Mammary epithelial cell (primary cell): ENCODE measurements at regions of chr19 and their contacts with region 1.

Region 1: DNA sequence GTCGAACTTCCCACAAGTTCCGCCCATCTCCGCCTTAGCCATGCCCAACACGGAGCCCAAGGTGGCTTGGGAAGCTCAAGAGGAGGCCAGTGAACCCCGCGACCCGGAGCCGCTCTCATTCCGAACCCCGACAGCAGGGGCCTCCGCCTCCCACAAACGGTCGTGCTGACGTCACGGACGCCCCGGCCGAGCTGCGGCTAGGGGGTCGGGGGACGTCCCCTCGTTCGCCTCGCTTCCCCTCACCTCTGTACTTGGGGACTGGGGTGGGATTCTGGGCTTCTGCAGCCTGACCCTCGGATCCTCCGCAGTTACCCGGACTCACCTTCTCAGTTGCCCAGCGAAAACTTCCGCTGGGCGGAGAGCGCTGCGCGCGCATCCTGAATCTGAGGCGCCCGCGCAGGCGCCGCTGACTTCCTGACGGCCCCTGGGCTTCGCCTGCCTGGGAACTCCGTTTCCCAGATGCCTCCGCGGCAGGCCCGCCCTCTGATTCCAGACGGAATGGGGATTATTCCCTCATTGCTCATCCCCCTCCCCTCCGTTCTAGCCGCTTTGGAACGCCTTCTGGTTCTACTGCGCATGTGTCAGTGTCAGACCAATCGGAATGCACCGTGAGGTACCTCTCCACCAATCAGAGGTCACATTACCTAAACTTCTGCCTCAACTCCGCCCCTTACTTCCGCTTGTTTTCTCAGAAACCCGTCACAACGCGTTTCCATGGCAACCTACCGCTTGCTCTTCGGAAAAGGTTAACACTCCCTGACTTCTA is at the start of gene VRK3:
- DNase-seq: peak; percentile 100
- H3K4me3 ChIP-seq: peak within 1 kb of the TSS; percentile 89 to 99 (median 98)
- H3K27ac ChIP-seq: peak within 1 kb of the TSS; percentile 98
- H3K4me1 ChIP-seq: peaks cover 5% of the 10 kb centered on the region
- H3K27me3 ChIP-seq: no peaks in the 10 kb centered on the region
- CTCF ChIP-seq: peak; percentile 7 to 36
- total RNA-seq, gene VRK3: 20.7 to 32.8 TPM

Region 2: GRCh38 chr19:49881672-49882394 is 143.4 kb before region 1 on chr19:
- CTCF ChIA-PET with region 1: no interaction called
- dilution Hi-C with region 1: no loop called
- in situ Hi-C with region 1: no loop called
- intact Hi-C with region 1: no loop called
- DNase-seq: no peak
- H3K4me3 ChIP-seq: no peak overlapping the region
- H3K27ac ChIP-seq: no peak overlapping the region
- H3K4me1 ChIP-seq: peaks cover 12% of the 10 kb centered on the region
- H3K27me3 ChIP-seq: no peaks in the 10 kb centered on the region
- CTCF ChIP-seq: no peak

Region 3: DNA sequence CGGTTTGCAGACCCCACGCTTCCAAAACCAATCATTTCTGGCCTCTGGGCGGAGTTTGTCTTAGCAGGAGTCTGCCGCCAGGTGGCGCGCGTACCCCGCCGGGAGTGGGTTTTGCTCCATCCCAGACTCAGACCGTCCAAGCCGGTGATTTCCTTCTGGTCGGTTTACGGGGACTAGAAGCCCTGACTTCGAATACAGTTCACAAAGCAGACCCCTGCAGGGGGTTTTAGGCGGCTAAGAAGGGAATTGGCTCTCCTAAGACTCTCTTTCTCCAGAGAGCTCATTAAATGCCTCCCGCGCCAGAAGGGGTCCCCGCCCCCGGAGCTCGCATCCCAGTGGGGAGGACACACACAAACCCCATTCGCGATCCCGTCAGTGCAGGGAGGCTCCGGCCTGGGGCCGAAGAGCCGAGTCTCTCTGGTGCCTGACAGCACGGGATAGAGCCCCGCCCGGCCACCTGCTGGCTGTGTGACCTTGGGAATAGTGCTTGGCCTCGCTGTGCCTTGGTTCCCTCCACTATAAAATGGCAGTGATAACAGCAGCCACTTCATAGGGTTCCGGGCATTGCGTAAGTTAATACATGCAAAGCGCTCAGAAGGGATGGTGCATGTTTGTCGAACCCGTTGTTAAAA is 87.3 kb before region 1 on chr19:
- CTCF ChIA-PET with region 1: no interaction called
- dilution Hi-C with region 1: no loop called
- in situ Hi-C with region 1: no loop called
- intact Hi-C with region 1: loop called (anchors 2 kb)
- DNase-seq: peak; percentile 39
- H3K4me3 ChIP-seq: peak overlapping the region; percentile 21 to 28 (median 26)
- H3K27ac ChIP-seq: no peak overlapping the region
- H3K4me1 ChIP-seq: no peaks in the 10 kb centered on the region
- H3K27me3 ChIP-seq: no peaks in the 10 kb centered on the region
- CTCF ChIP-seq: peak; percentile 86 to 99

Region 4: DNA sequence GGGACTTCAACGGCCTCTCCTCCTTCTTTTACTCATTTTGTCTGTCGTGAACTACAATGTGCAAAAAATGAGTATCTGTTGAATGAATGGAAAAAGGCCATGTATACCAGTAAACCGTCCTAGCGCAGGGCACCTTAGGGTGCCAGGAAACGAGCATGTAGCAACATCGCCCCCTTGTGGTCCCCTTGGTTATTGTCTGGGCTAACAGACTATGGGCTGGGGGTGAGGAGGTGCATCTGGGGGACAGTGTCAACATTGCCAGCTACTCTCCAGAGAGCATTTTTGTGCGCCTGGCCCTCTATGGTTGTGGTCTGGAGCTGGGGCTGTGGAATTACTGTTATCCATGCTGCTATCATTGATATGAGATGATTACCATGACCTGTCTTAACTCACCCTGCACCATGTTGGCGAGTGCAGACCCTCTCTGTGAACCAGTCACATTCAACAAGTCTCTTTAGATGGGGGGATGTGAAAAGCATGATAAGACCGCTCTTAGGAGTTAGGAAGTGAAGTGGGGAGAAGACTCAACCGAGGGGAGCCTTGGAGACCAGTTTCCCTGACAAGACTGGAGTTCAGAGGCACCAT is 41.5 kb before region 1 on chr19:
- CTCF ChIA-PET with region 1: no interaction called
- dilution Hi-C with region 1: no loop called
- in situ Hi-C with region 1: no loop called
- intact Hi-C with region 1: loop called (anchors 1 kb)
- DNase-seq: peak; percentile 20
- H3K4me3 ChIP-seq: no peak overlapping the region
- H3K27ac ChIP-seq: no peak overlapping the region
- H3K4me1 ChIP-seq: no peaks in the 10 kb centered on the region
- H3K27me3 ChIP-seq: no peaks in the 10 kb centered on the region
- CTCF ChIP-seq: peak; percentile 80 to 81

Region 5: GRCh38 chr19:50050384-50051224 is 25.4 kb after region 1 on chr19:
- CTCF ChIA-PET with region 1: no interaction called
- dilution Hi-C with region 1: no loop called
- in situ Hi-C with region 1: no loop called
- intact Hi-C with region 1: loop called (anchors 2 kb)
- DNase-seq: peak; percentile 77
- H3K4me3 ChIP-seq: peak overlapping the region; percentile 24 to 55 (median 40)
- H3K27ac ChIP-seq: peak overlapping the region; percentile 39
- H3K4me1 ChIP-seq: peaks cover 4% of the 10 kb centered on the region
- H3K27me3 ChIP-seq: no peaks in the 10 kb centered on the region
- CTCF ChIP-seq: no peak

Region 6: DNA sequence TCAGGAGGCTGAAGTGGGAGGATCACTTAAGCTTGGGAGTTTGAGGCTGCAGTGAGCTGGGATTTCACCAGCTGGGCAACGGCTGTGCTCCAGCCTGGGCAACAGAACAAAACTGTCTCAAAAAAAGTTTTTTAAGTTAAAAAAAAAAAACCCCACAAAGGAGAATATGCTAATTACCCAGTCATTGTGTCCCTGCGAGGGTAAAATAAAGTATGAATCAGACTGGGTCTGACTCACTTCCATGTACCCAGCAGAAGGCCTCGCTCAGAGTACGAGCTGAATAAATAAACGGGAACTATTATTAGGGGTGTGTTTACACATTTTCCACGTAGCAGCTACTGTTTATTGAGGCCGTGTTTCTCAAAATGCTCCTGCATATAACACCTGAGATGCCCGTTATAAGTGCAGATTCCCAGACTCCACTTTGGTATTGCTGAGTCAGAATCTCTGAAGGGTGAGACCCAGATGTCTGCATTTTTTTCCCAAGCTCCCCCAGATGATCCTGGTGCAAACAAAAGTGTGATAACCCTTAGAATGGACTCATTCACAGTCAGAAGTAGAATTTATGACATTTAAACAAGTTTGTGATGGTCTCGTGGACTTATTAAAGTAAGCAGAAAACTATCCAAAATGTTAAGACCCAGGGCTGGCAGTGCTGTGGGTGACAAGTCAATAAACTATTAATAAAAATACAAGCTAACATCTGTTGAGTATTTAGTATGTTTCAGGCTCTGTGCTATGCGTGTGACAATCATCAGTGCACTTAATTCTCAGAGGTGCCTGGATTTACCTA is 275.8 kb after region 1 on chr19:
- CTCF ChIA-PET with region 1: no interaction called
- dilution Hi-C with region 1: no loop called
- in situ Hi-C with region 1: no loop called
- intact Hi-C with region 1: no loop called
- DNase-seq: peak; percentile 51
- H3K4me3 ChIP-seq: no peak overlapping the region
- H3K27ac ChIP-seq: no peak overlapping the region
- H3K4me1 ChIP-seq: no peaks in the 10 kb centered on the region
- H3K27me3 ChIP-seq: no peaks in the 10 kb centered on the region
- CTCF ChIP-seq: no peak